Panc1 (cell line): ENCODE measurements at regions of chr3 and their contacts with region 1.

Region 1: GRCh38 chr3:52645549-52645948 is 40.2 kb downstream of the PBRM1 start:
- DNase-seq: no peak
- ATAC-seq: no peak
- H3K4me3 ChIP-seq: no peak overlapping the region
- H3K27ac ChIP-seq: no peak overlapping the region
- H3K4me1 ChIP-seq: no peaks in the 10 kb centered on the region
- H3K27me3 ChIP-seq: no peaks in the 10 kb centered on the region
- CTCF ChIP-seq: no peak

Region 2: GRCh38 chr3:52436500-52437149 is 208.9 kb before region 1 on chr3:
- CTCF ChIA-PET with region 1: no interaction called
- POLR2A ChIA-PET with region 1: no interaction called
- in situ Hi-C with region 1: no loop called
- intact Hi-C with region 1: no loop called
- DNase-seq: no peak
- ATAC-seq: no peak
- H3K4me3 ChIP-seq: no peak overlapping the region
- H3K27ac ChIP-seq: no peak overlapping the region
- H3K4me1 ChIP-seq: no peaks in the 10 kb centered on the region
- H3K27me3 ChIP-seq: no peaks in the 10 kb centered on the region
- CTCF ChIP-seq: no peak

Region 3: DNA sequence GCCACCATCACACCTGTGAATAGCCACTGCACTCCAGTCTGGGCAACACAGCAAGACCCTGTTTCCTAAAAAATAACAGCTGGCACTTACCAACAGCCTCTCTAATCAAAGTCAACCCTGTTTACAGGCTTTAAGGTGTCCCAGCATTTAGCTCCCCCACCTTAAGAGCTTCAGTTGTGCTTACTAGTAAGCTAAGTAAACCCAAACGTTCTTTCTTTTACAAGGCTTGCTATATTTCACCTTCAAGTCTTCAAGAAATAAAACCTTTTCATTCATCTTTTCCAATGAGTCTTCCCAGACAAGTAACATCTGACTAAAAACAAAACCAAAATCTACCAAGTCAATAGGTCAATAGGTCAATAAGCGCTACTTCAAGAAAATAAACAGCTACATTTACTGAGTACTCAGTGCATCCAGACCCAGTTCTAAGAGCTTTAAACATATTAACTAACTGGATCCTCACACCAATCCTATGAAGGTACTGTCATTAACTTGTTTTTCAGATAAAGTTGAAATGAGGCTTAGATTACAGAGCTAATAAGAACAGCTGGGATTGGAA is 22.2 kb before region 1 on chr3:
- CTCF ChIA-PET with region 1: no interaction called
- POLR2A ChIA-PET with region 1: interaction called, 12 read pairs
- in situ Hi-C with region 1: no loop called
- intact Hi-C with region 1: no loop called
- DNase-seq: no peak
- ATAC-seq: no peak
- H3K4me3 ChIP-seq: no peak overlapping the region
- H3K27ac ChIP-seq: no peak overlapping the region
- H3K4me1 ChIP-seq: no peaks in the 10 kb centered on the region
- H3K27me3 ChIP-seq: no peaks in the 10 kb centered on the region
- CTCF ChIP-seq: no peak